Testis (tissue), 5 donors: ENCODE measurements at regions of chr9 and their contacts with region 1.

Region 1: GRCh38 chr9:38008168-38009034 is 60.6 kb downstream of the SHB start:
- DNase-seq: no peak
- H3K4me3 ChIP-seq: no peak overlapping the region
- H3K27ac ChIP-seq: no peak overlapping the region
- H3K4me1 ChIP-seq: no peaks in the 10 kb centered on the region
- H3K27me3 ChIP-seq: no peaks in the 10 kb centered on the region
- CTCF ChIP-seq: no peak
- POLR2A ChIP-seq: no peak

Region 2: GRCh38 chr9:38141746-38142591 is 133.6 kb after region 1 on chr9:
- intact Hi-C with region 1: loop called (anchors 10 kb)
- DNase-seq: no peak
- H3K4me3 ChIP-seq: no peak overlapping the region
- H3K27ac ChIP-seq: no peak overlapping the region
- H3K4me1 ChIP-seq: no peaks in the 10 kb centered on the region
- H3K27me3 ChIP-seq: no peaks in the 10 kb centered on the region
- CTCF ChIP-seq: no peak
- POLR2A ChIP-seq: no peak